Activated CD4-positive, alpha-beta memory T cell treated with anti-CD3 and anti-CD28 coated beads, Interleukin-2, amount 10 ng/mL, durations not matched to agents 7 days and 5 days (primary cell): ENCODE measurements at regions of chr17 and their contacts with region 1.

Region 1: GRCh38 chr17:74790161-74791054 is 14.3 kb upstream of the NAT9 start:
- DNase-seq: no peak
- H3K4me3 Mint-ChIP-seq: no peak overlapping the region
- H3K27ac Mint-ChIP-seq: peak overlapping the region; percentile 41
- H3K4me1 Mint-ChIP-seq: peaks cover 40% of the 10 kb centered on the region
- H3K27me3 Mint-ChIP-seq: no peaks in the 10 kb centered on the region

Region 2: GRCh38 chr17:74742153-74742515 is 48.3 kb before region 1 on chr17:
- CTCF ChIA-PET with region 1: interaction called, 30 read pairs
- POLR2A ChIA-PET with region 1: interaction called, 8 read pairs
- DNase-seq: peak; percentile 84
- H3K4me3 Mint-ChIP-seq: peak overlapping the region; percentile 69
- H3K27ac Mint-ChIP-seq: peak overlapping the region; percentile 91
- H3K4me1 Mint-ChIP-seq: peaks cover 91% of the 10 kb centered on the region
- H3K27me3 Mint-ChIP-seq: no peaks in the 10 kb centered on the region

Region 3: GRCh38 chr17:74759243-74759801 is 31.1 kb before region 1 on chr17:
- CTCF ChIA-PET with region 1: interaction called, 12 read pairs
- POLR2A ChIA-PET with region 1: interaction called, 5 read pairs
- DNase-seq: peak; percentile 82
- H3K4me3 Mint-ChIP-seq: peak overlapping the region; percentile 61
- H3K27ac Mint-ChIP-seq: peak overlapping the region; percentile 79
- H3K4me1 Mint-ChIP-seq: peaks cover 76% of the 10 kb centered on the region
- H3K27me3 Mint-ChIP-seq: no peaks in the 10 kb centered on the region

Region 4: GRCh38 chr17:74776044-74776977 is 14.1 kb before region 1 on chr17 and contains the start of gene NAT9:
- CTCF ChIA-PET with region 1: interaction called, 30 read pairs
- POLR2A ChIA-PET with region 1: interaction called, 17 read pairs
- DNase-seq: peak; percentile 99
- H3K4me3 Mint-ChIP-seq: peak within 1 kb of the TSS; percentile 99
- H3K27ac Mint-ChIP-seq: peak within 1 kb of the TSS; percentile 85
- H3K4me1 Mint-ChIP-seq: peaks cover 68% of the 10 kb centered on the region
- H3K27me3 Mint-ChIP-seq: no peaks in the 10 kb centered on the region
- total RNA-seq, gene NAT9: 32.1 to 32.3 TPM

Region 5: DNA sequence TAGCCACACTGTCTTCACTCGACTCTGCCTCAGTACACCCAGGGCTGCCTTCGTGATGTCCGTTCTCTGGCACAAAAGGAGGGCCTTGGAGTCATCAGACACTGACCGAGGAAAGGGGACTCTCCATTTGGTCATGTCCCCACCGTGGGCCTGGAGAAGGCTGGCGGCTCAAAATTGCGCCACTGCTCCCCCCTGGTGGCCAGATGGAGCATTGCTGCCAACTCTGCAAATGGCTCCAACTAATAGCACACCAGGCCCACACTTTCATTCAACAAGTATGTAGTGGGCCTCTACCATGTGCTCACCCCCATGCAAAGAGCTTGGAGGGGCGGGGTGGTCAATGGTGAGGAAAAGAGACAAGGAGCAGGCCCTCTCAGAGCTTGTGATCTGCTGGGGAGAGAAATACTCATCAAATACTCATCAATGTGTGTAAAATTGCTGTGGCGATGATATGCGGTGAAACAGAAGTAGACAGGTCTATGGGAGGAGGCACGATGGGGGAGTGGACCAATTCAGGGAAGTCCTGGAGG is 74.5 kb after region 1 on chr17:
- CTCF ChIA-PET with region 1: interaction called, 56 read pairs
- POLR2A ChIA-PET with region 1: interaction called, 7 read pairs
- DNase-seq: peak; percentile 77
- H3K4me3 Mint-ChIP-seq: no peak overlapping the region
- H3K27ac Mint-ChIP-seq: no peak overlapping the region
- H3K4me1 Mint-ChIP-seq: peaks cover 26% of the 10 kb centered on the region
- H3K27me3 Mint-ChIP-seq: peaks cover 19% of the 10 kb centered on the region